A549 (cell line): ENCODE measurements at regions of chr5 and their contacts with region 1.

Region 1: DNA sequence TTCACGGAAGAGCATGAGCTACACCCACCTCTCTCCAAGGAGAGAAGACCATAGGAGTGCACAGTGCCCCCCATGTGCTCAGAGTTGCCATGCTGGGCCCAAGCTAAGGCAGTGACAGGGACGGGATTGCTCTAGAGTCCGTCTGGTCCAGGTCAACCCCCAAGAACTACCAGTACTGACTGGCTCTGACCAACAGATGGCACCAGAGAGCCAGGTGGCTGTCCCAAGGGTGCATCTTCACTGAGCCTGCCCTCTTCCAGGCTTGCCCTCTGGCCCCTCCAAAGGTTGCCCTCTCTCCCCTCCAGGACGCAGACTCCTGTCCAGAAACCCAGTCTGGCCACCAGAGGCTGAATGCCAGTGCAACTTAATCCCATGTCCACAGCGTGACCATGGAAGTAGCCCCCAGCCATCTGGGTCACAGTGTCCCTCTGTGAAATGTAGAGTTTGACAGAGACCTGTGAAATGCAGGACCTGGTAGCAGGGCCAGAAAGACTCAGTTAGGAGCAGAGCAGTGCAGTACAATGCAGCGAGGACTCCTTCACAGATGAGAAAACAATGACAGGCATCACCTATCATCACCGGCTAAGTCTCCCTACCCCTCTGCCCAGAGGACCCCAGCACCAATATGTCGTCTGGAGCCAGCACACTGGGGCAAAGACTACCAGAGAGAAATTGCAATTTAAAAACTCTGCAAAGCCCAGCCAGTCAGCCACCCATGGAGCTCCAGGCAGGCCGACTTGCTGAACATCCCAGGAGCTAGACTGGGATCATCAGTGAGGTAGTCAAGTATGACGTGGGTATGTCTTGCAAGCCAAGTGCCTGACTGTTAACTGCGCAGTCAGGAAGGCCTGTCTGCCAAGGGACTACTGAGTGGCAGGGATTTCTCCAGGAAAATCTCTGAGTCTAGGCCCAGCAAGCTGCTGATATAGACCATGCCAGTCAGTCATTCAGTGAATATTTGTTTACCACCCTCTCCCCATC is 7.7 kb upstream of the SKP1 start:
- DNase-seq: peak; percentile 73 to 87
- ATAC-seq: peak; percentile 87 to 95
- H3K4me3 ChIP-seq: no peak overlapping the region
- H3K27ac ChIP-seq: no peak overlapping the region
- H3K4me1 ChIP-seq: no peaks in the 10 kb centered on the region
- CTCF ChIP-seq: peak; percentile 90
- EP300 ChIP-seq: no peak
- POLR2A ChIP-seq: no peak
- RAD21 ChIP-seq: peak; percentile 94 to 97

Region 2: GRCh38 chr5:133993231-133993949 is 191.1 kb before region 1 on chr5:
- CTCF ChIA-PET with region 1: no interaction called
- POLR2A ChIA-PET with region 1: no interaction called
- DNase-seq: no peak
- ATAC-seq: no peak
- H3K4me3 ChIP-seq: no peak overlapping the region
- H3K27ac ChIP-seq: no peak overlapping the region; a peak in 1 of 6 replicates
- H3K4me1 ChIP-seq: peaks cover 51% of the 10 kb centered on the region
- CTCF ChIP-seq: no peak
- EP300 ChIP-seq: no peak
- POLR2A ChIP-seq: no peak
- RAD21 ChIP-seq: no peak

Region 3: GRCh38 chr5:134070725-134071613 is 113.5 kb before region 1 on chr5:
- CTCF ChIA-PET with region 1: no interaction called
- POLR2A ChIA-PET with region 1: no interaction called
- DNase-seq: peak; percentile 59 to 66
- ATAC-seq: peak; percentile 62 to 80
- H3K4me3 ChIP-seq: peak overlapping the region; percentile 54
- H3K27ac ChIP-seq: peak overlapping the region; percentile 64 to 90
- H3K4me1 ChIP-seq: peaks cover 8% of the 10 kb centered on the region; the same call in 2 of the 3 replicates
- CTCF ChIP-seq: peak; percentile 11; the same call in 1 of the 3 replicates
- EP300 ChIP-seq: no peak
- POLR2A ChIP-seq: no peak
- RAD21 ChIP-seq: no peak

Region 4: DNA sequence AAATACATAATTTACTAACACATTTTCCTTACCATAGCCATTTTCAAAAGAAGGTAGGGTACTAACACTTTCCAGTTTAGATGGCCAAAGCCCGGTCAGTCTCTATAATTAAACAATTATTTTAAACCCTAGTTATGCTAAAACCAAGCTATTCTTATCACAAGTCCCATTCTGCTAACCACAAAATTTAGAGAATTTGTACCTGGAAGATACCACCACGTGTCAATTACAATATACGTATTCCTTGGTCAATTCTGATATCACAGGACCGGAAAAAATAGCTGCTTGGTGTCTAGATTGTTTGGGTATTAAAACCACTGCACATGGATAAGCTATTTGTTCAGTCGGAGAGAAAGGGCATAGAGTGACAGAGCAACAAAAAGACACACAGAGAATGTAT is 11.2 kb after region 1 on chr5:
- CTCF ChIA-PET with region 1: interaction called, 34 read pairs
- POLR2A ChIA-PET with region 1: no interaction called
- DNase-seq: no peak
- ATAC-seq: no peak
- H3K4me3 ChIP-seq: no peak overlapping the region
- H3K27ac ChIP-seq: no peak overlapping the region
- H3K4me1 ChIP-seq: no peaks in the 10 kb centered on the region; the same call in 2 of the 3 replicates
- CTCF ChIP-seq: no peak
- EP300 ChIP-seq: no peak
- POLR2A ChIP-seq: no peak
- RAD21 ChIP-seq: no peak

Region 5: GRCh38 chr5:134209477-134210240 is 25.2 kb after region 1 on chr5:
- CTCF ChIA-PET with region 1: interaction called, 30 read pairs
- POLR2A ChIA-PET with region 1: no interaction called
- DNase-seq: no peak
- ATAC-seq: no peak
- H3K4me3 ChIP-seq: no peak overlapping the region
- H3K27ac ChIP-seq: no peak overlapping the region
- H3K4me1 ChIP-seq: no peaks in the 10 kb centered on the region
- CTCF ChIP-seq: no peak
- EP300 ChIP-seq: no peak
- POLR2A ChIP-seq: no peak
- RAD21 ChIP-seq: no peak

Region 6: GRCh38 chr5:134249469-134250379 is 65.3 kb after region 1 on chr5:
- CTCF ChIA-PET with region 1: interaction called, 11 read pairs
- POLR2A ChIA-PET with region 1: no interaction called
- DNase-seq: peak in 1 of 2 experiments; percentile 45
- ATAC-seq: 0 out of 6 replicates have a peak, but pooled peaks of 1 of the 2 experiments have one; percentile 7
- H3K4me3 ChIP-seq: no peak overlapping the region
- H3K27ac ChIP-seq: peak overlapping the region; percentile 10 to 35; a peak in 4 of 6 replicates
- H3K4me1 ChIP-seq: peaks cover 57% of the 10 kb centered on the region
- CTCF ChIP-seq: no peak
- EP300 ChIP-seq: no peak
- POLR2A ChIP-seq: no peak
- RAD21 ChIP-seq: no peak

Region 7: GRCh38 chr5:134281081-134281480 is 96.6 kb after region 1 on chr5:
- CTCF ChIA-PET with region 1: interaction called, 345 read pairs
- POLR2A ChIA-PET with region 1: no interaction called
- DNase-seq: no peak
- ATAC-seq: no peak
- H3K4me3 ChIP-seq: no peak overlapping the region
- H3K27ac ChIP-seq: no peak overlapping the region
- H3K4me1 ChIP-seq: peaks cover 15% of the 10 kb centered on the region
- CTCF ChIP-seq: no peak
- EP300 ChIP-seq: no peak
- POLR2A ChIP-seq: no peak
- RAD21 ChIP-seq: no peak